ENCODE measurements at regions of chr10 and their contacts with region 1.

Region 1: DNA sequence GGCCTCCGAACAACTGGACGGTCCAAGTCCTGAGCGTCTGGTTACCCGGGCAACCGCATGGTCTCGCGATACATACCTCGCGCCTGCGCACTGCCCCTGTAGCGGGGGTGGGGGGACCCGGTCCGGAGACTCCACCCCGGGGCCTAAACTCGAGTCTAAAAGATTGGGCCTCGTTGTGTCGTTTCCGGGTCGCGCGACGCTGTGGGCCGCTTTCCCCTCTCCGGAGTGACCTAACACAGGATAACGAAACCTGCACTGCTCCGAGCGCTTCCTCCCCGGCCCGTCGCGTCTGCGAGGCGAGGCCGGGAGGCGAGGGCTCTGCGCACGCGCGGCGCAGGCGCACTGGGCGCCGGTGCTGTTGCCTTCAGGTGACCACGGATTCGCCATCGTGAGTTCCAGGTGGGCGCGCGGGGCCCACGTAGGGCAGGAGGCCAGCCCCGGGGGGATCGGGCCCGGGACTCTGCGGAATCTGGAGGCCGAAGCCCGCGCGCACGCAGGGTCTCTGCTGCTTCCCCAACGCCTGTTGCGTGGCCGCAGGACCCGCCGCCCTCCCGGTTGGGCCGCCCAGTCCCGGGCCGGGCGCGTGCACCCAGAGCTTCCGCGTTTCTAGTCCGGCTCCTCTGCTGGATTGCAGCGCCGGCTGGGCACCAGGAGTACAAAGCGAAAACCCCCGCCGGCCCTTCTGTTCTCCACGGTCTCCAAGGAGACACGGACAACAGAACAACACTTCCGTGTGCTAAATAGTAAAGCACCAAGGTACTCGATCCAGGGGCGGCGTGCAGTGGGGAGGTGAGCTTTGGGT is at the start of gene RPP38:
- DNase-seq: peak; percentile 94 to 98
- H3K4me3 ChIP-seq: peak within 1 kb of the TSS; percentile 80 to 93
- H3K27ac ChIP-seq: peak within 1 kb of the TSS; percentile 87 to 91
- H3K4me1 ChIP-seq: peaks cover 0 to 31% (median 22%) of the 10 kb centered on the region in 4 donors
- H3K27me3 ChIP-seq: peaks cover 0 to 3% of the 10 kb centered on the region in 2 donors
- CTCF ChIP-seq: no peak

Region 2: DNA sequence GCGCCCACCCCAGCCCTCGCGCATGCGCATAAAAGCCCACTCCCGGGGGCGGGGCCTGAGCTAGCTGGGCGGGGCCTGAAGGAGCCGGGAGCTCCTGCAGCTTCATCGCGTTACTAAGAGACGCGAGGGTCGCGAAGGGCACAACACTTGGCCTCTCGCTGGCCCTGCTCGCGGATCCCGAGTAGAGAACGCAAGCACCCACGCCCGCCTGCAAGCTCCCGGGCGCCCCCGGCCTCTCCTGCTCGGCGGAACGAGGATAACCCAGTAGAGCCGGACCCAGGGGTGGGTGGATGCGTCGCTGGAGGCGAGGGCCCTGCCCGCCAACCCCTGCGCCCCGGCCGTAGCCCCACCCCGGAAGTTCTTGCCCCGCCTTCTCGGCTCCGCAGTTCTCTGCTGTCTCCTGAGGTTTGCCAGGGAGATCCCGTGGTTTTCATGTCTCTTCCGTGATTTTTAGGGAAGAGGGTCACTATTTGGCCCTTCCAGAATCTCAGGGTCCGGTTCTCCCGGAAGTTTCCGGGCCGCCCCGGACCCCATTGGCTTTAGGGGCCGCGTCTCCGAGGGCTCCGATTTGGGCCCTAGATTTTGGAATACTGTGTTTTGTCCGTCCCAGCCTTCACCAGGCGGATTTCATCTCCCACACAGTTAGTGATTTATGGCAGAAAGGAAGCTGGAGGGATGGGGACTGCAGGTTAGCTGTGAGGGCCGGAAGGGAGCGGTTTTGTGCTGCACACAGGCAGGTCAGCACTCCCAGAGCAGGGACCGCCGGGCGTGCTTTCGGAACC is 137.7 kb before region 1 on chr10 and contains the start of gene MEIG1:
- intact Hi-C with region 1: loop called (anchors 10 kb)
- DNase-seq: peak; percentile 92 to 97
- H3K4me3 ChIP-seq: peak within 1 kb of the TSS; percentile 68 to 77
- H3K27ac ChIP-seq: peak within 1 kb of the TSS; percentile 90 to 99
- H3K4me1 ChIP-seq: peaks cover 0 to 17% (median 6%) of the 10 kb centered on the region in 4 donors
- H3K27me3 ChIP-seq: no peaks in the 10 kb centered on the region
- CTCF ChIP-seq: no peak

Region 3: DNA sequence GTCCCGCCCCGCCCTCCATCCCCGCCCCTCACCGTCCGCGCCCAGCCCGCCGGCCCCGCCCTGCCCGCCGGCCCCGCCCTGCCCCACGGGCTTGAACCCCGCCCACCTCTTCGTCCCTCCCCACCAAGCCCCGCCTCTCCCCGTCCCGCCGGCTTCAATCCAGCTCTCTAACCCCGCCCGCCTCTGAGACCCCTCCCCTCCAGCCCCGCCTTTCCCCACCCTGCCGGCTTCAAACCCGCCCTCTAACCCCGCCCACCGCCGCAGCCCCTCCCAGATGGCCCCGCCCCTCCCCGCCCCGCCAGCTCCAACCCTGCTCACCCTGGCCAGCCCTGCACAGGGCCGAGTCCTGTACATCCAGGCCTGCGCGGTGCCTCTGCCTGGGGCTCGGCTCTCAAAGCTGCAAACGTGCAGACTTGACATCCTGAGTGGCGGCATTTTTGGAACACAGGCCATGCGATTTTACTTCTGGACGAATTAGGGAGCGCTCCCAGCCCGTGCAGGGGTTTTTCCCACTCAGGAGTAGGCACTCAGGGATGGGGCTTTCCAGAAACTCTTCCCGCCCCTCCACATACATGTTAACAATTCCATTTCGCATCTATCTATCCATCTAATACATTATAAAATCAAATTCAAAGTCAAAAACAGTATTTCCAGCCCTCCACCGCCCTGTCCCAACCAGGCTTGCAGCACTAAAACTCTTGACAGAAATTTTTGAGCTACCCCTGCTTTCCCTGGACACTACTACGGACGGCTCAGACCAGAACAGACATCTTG is 71.8 kb after region 1 on chr10:
- intact Hi-C with region 1: loop called (anchors 10 kb)
- DNase-seq: peak; percentile 93 to 97
- H3K4me3 ChIP-seq: peak overlapping the region; percentile 16 to 20
- H3K27ac ChIP-seq: peak overlapping the region in 1 of 2 donors; percentile 58
- H3K4me1 ChIP-seq: peaks cover 0 to 25% (median 15%) of the 10 kb centered on the region in 4 donors
- H3K27me3 ChIP-seq: no peaks in the 10 kb centered on the region
- CTCF ChIP-seq: no peak

Region 4: GRCh38 chr10:15267496-15267895 is 170.3 kb after region 1 on chr10:
- intact Hi-C with region 1: no loop called
- DNase-seq: no peak
- H3K4me3 ChIP-seq: no peak overlapping the region
- H3K27ac ChIP-seq: no peak overlapping the region
- H3K4me1 ChIP-seq: no peaks in the 10 kb centered on the region
- H3K27me3 ChIP-seq: no peaks in the 10 kb centered on the region
- CTCF ChIP-seq: no peak

Measured in tibial artery (tissue), 4 donors.